Mammary epithelial cell (primary cell): ENCODE measurements at regions of chr17 and their contacts with region 1.

Region 1: DNA sequence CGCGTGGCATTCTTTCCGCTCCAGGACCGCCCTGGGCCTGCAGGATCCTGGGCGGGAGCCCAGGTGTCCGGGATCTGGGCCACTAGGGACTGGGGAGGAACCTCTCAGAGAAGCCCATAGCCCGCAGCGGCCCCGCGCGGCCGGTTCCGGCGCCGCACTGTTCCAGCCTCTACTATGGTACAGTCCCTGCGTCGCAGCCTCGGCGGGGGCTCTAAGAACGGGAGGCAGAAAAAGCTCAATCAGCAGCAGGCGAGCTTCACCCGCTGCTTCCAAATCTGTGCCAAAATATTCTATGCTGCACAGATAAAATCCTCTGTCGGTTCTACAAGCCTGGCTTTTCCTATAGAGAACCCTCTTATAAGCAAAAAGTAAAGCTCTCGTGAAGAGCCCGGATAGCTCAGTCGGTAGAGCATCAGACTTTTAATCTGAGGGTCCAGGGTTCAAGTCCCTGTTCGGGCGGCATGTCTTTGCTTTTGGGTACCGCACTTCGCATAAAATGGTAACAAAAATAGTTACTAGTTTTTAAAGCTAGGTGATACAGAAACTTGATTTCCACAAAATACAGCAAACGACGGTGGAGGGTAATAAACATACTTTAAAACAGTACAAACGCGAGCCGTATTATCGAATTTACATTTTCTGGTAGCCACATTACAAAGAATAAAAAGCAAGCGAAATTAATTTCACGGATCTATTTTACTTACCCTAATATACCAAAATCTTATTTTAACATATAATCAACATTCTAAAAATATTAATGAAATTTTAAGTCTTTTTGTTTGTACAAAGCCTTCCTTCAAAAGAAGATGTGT is 661 bp upstream of the ALOXE3 start:
- DNase-seq: peak; percentile 75
- H3K4me3 ChIP-seq: peak overlapping the region; percentile 54 to 61 (median 57)
- H3K27ac ChIP-seq: peak overlapping the region; percentile 95
- H3K4me1 ChIP-seq: peaks cover 29% of the 10 kb centered on the region
- H3K27me3 ChIP-seq: no peaks in the 10 kb centered on the region
- CTCF ChIP-seq: peak; percentile 61 to 85

Region 2: GRCh38 chr17:7351665-7352501 is 767.1 kb before region 1 on chr17 and contains the start of gene KCTD11:
- CTCF ChIA-PET with region 1: no interaction called
- dilution Hi-C with region 1: no loop called
- in situ Hi-C with region 1: no loop called
- intact Hi-C with region 1: no loop called
- DNase-seq: peak; percentile 99
- H3K4me3 ChIP-seq: peak within 1 kb of the TSS; percentile 60 to 88 (median 77)
- H3K27ac ChIP-seq: peak within 1 kb of the TSS; percentile 99
- H3K4me1 ChIP-seq: peaks cover 46% of the 10 kb centered on the region
- H3K27me3 ChIP-seq: no peaks in the 10 kb centered on the region
- CTCF ChIP-seq: peak in 1 of 2 donors; percentile 30
- total RNA-seq, gene KCTD11: 13.2 to 43.9 TPM

Region 3: DNA sequence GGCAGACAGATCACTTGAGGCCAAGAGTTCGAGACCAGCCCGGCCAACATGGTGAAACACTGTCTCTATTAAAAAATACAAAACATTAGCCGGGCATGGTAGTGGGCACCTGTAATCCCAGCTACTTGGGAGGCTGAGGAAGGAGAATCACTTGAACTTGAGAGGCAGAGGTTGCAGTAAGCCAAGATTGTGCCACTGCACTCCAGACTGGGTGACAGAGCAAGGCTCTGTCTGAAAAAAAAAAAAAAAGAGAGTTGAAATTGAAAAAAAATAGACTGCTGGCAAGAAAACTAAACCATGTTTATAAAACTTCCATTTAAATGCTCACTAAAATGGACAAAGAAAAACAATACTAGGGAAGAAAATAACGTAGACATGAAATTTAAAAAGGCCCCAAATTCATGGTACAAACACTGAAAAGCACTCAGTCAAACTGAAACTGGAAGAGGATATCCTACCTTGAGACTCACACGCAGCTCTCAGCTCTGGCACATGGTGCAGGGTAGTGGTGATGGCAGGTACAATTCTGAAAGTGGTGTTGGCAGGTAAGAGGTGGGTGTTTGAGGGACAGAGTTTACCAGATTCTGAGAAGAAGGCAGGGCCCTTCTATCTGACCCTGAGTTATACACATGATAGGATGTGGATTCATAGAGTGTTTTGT is 167.7 kb before region 1 on chr17:
- CTCF ChIA-PET with region 1: no interaction called
- dilution Hi-C with region 1: no loop called
- in situ Hi-C with region 1: no loop called
- intact Hi-C with region 1: no loop called
- DNase-seq: no peak
- H3K4me3 ChIP-seq: no peak overlapping the region
- H3K27ac ChIP-seq: no peak overlapping the region
- H3K4me1 ChIP-seq: no peaks in the 10 kb centered on the region
- H3K27me3 ChIP-seq: no peaks in the 10 kb centered on the region
- CTCF ChIP-seq: no peak

Region 4: DNA sequence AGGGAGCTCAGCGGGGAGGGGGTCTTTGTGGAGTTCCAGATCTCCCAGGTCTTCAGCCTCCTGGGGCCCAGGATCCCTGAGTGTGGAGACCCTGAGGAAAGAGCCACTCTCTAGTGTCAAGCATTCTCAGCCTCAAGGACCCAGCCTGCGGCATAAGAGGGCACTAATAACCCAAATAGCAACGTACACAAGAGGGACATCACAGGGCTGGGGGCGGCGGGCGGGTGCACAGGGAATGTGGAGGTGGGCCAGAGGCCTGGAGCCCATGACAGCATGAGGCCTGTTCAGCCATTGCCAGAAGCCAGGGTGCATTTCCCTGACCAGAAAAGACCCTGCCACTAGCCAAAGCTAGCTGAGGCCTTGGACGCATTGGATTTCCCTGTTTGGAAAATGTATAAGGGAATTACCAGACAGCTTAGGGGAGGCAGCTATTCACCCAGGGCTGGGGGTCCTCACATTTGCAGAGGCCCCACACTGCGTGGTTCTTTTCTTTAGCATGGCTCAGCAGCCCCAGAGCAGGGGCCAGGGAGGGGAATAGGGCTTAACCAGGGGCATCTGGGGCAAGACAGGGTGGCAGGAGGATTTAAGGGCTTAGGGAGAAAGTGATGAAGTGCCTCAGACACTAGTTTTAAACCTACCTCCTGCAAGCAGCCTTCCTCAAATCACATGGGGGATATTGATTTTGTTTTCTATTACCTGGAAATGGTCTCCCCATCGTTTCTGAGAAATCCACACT is 93.6 kb before region 1 on chr17:
- CTCF ChIA-PET with region 1: no interaction called
- dilution Hi-C with region 1: no loop called
- in situ Hi-C with region 1: no loop called
- intact Hi-C with region 1: no loop called
- DNase-seq: no peak
- H3K4me3 ChIP-seq: no peak overlapping the region
- H3K27ac ChIP-seq: no peak overlapping the region
- H3K4me1 ChIP-seq: peaks cover 19% of the 10 kb centered on the region
- H3K27me3 ChIP-seq: no peaks in the 10 kb centered on the region
- CTCF ChIP-seq: no peak

Region 5: GRCh38 chr17:8079291-8080207 is 39.4 kb before region 1 on chr17:
- CTCF ChIA-PET with region 1: no interaction called
- dilution Hi-C with region 1: loop called (anchors 5 kb)
- in situ Hi-C with region 1: loop called (anchors 5 kb)
- intact Hi-C with region 1: loop called (anchors 1 kb)
- DNase-seq: peak; percentile 61
- H3K4me3 ChIP-seq: peak overlapping the region; percentile 28 to 57 (median 52)
- H3K27ac ChIP-seq: no peak overlapping the region
- H3K4me1 ChIP-seq: peaks cover 19% of the 10 kb centered on the region
- H3K27me3 ChIP-seq: no peaks in the 10 kb centered on the region
- CTCF ChIP-seq: peak; percentile 54 to 85

Region 6: GRCh38 chr17:8156246-8156992 is 37.4 kb after region 1 on chr17:
- CTCF ChIA-PET with region 1: interaction called, 4 read pairs
- dilution Hi-C with region 1: loop called (anchors 5 kb)
- in situ Hi-C with region 1: no loop called
- intact Hi-C with region 1: loop called (anchors 1 kb)
- DNase-seq: peak; percentile 100
- H3K4me3 ChIP-seq: peak overlapping the region; percentile 85 to 92 (median 88)
- H3K27ac ChIP-seq: peak overlapping the region; percentile 100
- H3K4me1 ChIP-seq: peaks cover 34% of the 10 kb centered on the region
- H3K27me3 ChIP-seq: no peaks in the 10 kb centered on the region
- CTCF ChIP-seq: peak in 1 of 2 donors; percentile 18

Region 7: GRCh38 chr17:8222630-8223356 is 103.8 kb after region 1 on chr17:
- CTCF ChIA-PET with region 1: interaction called, 4 read pairs
- dilution Hi-C with region 1: no loop called
- in situ Hi-C with region 1: no loop called
- intact Hi-C with region 1: loop called (anchors 1 kb)
- DNase-seq: peak; percentile 96
- H3K4me3 ChIP-seq: peak overlapping the region; percentile 53 to 74 (median 60)
- H3K27ac ChIP-seq: peak overlapping the region; percentile 74
- H3K4me1 ChIP-seq: peaks cover 25% of the 10 kb centered on the region
- H3K27me3 ChIP-seq: no peaks in the 10 kb centered on the region
- CTCF ChIP-seq: no peak

Region 8: GRCh38 chr17:8300627-8301242 is 181.8 kb after region 1 on chr17:
- CTCF ChIA-PET with region 1: interaction called, 15 read pairs
- dilution Hi-C with region 1: loop called (anchors 5 kb)
- in situ Hi-C with region 1: no loop called
- intact Hi-C with region 1: loop called (anchors 1 kb)
- DNase-seq: peak; percentile 50
- H3K4me3 ChIP-seq: no peak overlapping the region
- H3K27ac ChIP-seq: no peak overlapping the region
- H3K4me1 ChIP-seq: no peaks in the 10 kb centered on the region
- H3K27me3 ChIP-seq: no peaks in the 10 kb centered on the region
- CTCF ChIP-seq: peak; percentile 89 to 90